ENCODE measurements at regions of chr5 and their contacts with region 1.

Region 1: DNA sequence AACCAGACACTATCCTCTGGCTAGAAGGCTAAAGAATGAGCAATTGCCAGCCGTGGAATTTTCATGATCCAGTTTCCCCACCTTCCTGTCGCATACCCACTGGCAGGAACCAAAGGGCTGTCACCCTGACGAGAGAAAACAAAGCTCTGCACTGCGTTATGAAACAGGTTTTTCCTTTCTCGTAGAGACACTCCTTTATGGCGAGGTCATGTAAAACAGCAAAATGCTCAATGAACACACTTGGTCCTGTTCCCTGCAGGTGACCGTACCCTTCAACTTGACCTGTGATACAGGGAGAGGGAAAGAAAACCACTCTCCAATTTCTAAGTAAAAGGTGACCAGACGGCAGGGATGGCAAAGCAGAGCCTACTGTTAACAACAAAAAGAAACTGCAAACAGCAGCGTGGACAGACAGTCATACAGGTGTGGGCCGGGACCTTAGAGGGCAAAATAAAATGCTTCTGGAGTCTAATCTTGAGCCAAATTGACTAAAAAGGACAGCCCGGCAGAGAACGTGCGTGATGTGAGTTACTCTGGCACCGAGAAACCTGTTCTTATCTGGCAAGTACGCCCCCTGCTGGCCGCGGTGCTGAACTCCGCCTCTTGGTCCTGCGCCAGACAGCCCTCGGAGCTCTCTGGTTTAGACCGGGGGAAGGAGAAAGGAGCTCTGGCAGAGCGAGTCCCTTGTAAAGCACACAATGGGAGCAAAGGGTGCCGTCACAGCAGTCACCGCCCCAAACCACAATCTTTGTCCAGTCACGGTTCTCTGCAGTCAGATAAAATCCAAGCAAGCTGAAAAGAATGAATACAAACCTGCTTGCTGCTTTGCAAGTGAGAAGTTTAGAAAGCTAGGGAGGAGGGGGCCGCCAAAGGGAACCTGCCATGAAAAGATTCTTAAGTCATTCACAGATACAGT is 98.9 kb downstream of the EFNA5 start:
- DNase-seq: peak; percentile 97
- H3K4me3 ChIP-seq: peak overlapping the region; percentile 20 to 42 (median 35)
- H3K27ac ChIP-seq: peak overlapping the region; percentile 80
- H3K4me1 ChIP-seq: peaks cover 64% of the 10 kb centered on the region
- H3K27me3 ChIP-seq: no peaks in the 10 kb centered on the region
- CTCF ChIP-seq: peak; percentile 79 to 92

Region 2: DNA sequence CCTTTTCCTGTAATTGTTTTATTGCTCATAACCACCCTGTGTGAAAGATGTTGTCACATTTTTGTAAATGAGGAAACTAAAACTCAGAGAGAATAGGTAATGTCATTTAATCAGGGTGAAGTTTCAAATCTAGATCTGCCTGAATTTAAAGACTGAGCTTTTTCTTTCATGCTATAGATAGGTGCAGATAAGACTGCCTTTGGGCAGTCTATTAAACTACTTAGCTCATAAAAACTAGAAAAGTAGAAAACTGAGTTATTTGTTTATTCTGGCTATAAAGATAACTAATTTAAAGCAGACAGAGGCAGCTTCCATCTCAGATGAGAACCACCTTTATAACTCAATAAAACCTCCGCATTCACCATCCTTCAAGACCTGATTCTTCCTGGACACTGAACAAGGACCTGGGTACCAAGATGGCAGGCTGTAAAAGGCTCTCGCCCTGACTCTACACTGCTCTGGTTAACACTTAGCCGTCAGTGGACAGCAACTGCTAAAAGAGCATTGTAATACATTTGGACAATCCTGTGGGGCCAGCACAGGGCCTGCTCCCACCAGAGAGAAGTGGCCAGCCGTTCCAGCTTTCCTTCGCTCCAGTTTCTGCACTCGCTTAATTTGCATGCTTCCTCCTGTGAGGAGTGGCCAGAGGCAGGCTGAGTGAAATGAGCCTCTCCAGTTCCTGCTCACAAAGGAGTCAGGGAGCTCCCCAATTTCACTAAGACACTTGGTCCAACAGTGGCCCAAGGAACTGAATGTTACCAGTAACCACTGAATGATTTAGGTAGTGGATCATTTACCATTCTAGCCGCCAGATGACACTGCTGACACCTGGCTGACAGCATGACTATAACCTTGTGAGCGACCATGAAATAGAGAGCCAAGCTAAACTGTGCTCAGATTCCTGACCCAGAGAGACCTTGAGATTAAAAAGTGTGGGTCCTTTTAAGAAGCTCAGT is 467.6 kb before region 1 on chr5:
- CTCF ChIA-PET with region 1: no interaction called
- dilution Hi-C with region 1: no loop called
- in situ Hi-C with region 1: no loop called
- intact Hi-C with region 1: loop called (anchors 1 kb)
- DNase-seq: no peak
- H3K4me3 ChIP-seq: no peak overlapping the region
- H3K27ac ChIP-seq: no peak overlapping the region
- H3K4me1 ChIP-seq: no peaks in the 10 kb centered on the region
- H3K27me3 ChIP-seq: no peaks in the 10 kb centered on the region
- CTCF ChIP-seq: peak in 1 of 2 donors; percentile 29

Region 3: DNA sequence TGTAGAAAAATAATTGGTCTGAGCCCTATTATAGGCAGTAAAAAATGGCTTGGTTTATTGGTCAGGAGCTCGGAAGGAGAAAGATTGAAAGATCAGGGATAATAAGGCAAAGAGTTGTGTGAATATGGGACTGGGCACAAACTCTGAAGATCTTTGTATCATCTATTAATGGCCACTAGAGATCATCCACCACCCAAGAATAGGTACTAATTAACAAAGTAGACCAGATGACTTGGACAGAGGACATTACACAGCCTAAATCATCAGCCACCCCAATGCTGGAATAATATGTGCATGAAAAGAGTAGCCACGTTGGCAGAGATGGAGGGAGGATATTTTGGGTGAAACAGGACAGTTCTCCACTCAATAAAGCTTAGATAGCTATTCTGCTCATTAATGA is 265.3 kb before region 1 on chr5:
- CTCF ChIA-PET with region 1: interaction called, 4 read pairs
- dilution Hi-C with region 1: no loop called
- in situ Hi-C with region 1: no loop called
- intact Hi-C with region 1: loop called (anchors 1 kb)
- DNase-seq: no peak
- H3K4me3 ChIP-seq: no peak overlapping the region
- H3K27ac ChIP-seq: no peak overlapping the region
- H3K4me1 ChIP-seq: no peaks in the 10 kb centered on the region
- H3K27me3 ChIP-seq: no peaks in the 10 kb centered on the region
- CTCF ChIP-seq: peak in 1 of 2 donors; percentile 6

Region 4: DNA sequence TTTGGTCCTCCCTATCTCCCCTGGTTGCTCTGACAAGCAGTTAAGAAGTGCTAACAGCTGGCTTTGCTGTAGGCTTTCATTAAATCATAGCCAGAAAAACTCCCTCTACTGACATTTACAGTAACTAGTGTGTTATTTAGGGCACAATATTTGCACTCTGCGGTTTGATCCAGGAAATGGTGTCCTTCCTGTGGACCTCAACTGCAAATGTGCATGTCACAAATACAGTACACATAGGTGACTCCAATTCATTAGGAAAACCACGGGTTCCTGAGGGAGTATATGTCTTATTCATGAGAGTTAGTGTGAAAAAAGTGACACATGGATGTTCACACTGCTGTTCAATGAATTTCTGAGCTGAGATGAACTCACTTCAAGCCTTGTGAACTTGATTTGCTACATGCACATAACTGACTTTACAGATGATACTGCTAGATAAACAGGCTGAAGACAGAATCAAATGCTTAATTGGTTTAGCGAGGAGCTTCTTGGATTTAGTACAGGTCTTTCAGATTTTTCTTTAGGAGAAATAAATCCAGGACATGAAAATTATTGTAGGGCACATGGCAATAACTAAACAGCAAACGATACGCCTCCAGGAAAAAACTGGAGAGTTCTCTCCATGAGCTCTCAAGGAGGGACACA is 182.6 kb before region 1 on chr5:
- CTCF ChIA-PET with region 1: no interaction called
- dilution Hi-C with region 1: loop called (anchors 10 kb)
- in situ Hi-C with region 1: no loop called
- intact Hi-C with region 1: loop called (anchors 1 kb)
- DNase-seq: peak; percentile 51
- H3K4me3 ChIP-seq: no peak overlapping the region
- H3K27ac ChIP-seq: peak overlapping the region; percentile 92
- H3K4me1 ChIP-seq: peaks cover 32% of the 10 kb centered on the region
- H3K27me3 ChIP-seq: no peaks in the 10 kb centered on the region
- CTCF ChIP-seq: peak in 1 of 2 donors; percentile 17

Region 5: GRCh38 chr5:107469485-107470294 is 102.2 kb before region 1 on chr5:
- CTCF ChIA-PET with region 1: no interaction called
- dilution Hi-C with region 1: loop called (anchors 5 kb)
- in situ Hi-C with region 1: loop called in 1 of 2 experiments (anchors 5 kb)
- intact Hi-C with region 1: no loop called
- DNase-seq: peak; percentile 93
- H3K4me3 ChIP-seq: peak overlapping the region in 1 of 3 experiments; percentile 4
- H3K27ac ChIP-seq: peak overlapping the region; percentile 89
- H3K4me1 ChIP-seq: peaks cover 62% of the 10 kb centered on the region
- H3K27me3 ChIP-seq: no peaks in the 10 kb centered on the region
- CTCF ChIP-seq: no peak

Region 6: GRCh38 chr5:107557051-107557658 is 14.7 kb before region 1 on chr5:
- CTCF ChIA-PET with region 1: interaction called, 7 read pairs
- dilution Hi-C with region 1: no loop called
- in situ Hi-C with region 1: no loop called
- intact Hi-C with region 1: loop called (anchors 2 kb)
- DNase-seq: peak; percentile 85
- H3K4me3 ChIP-seq: no peak overlapping the region
- H3K27ac ChIP-seq: peak overlapping the region; percentile 91
- H3K4me1 ChIP-seq: peaks cover 51% of the 10 kb centered on the region
- H3K27me3 ChIP-seq: no peaks in the 10 kb centered on the region
- CTCF ChIP-seq: peak in 1 of 2 donors; percentile 3